ENCODE measurements at regions of chr13 and their contacts with region 1.

Region 1: DNA sequence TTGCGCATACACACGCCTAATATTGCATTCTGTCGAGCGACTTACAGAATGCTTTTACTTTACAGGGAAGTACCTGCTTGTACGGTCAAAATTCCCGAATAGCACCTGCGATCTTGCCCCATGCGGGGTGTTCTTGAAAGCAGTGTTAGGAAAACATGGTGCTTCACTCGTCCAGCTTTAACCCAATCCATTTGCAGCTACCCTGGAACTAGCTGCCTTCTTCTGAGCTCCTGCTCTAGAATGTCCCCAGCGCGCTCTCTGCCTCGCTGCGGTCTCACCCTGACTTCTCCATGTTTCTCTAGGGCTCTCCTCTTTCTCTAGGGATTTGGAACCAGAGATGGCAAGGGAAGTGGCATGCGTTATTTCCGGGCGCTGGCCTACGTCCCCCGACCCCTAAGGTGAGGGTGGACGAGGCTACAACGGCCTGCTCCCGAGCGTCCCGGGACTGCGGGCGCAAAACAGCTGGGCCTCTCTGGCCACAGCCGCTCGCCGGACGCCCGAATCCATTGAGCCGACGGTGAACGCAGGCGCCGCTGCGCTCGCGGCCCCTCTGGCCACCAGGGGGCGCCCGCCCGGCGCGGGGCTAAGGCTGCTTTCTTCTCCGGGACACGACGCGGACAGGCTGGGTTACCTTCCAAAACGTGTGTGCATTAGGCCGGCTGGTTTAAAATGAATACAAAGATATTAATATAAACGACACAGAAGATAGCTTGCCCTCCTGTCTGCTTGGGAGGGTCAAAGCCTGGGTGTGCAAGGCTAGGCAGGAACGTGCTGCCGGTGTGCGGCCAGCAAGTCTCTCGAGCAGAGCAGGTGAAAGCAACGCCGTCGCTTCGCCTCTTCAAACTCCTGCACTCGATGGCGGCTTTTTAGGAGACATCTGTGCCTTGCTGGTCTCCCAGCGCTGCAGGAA is 1.8 kb upstream of the SPRY2 start:
- DNase-seq: peak; percentile 86 to 91
- ATAC-seq: peak; percentile 36 to 64 (median 54)
- H3K4me3 ChIP-seq: peak overlapping the region; percentile 16 to 96 (median 85)
- H3K27ac ChIP-seq: peak overlapping the region; percentile 96 to 99 (median 98)
- H3K4me1 ChIP-seq: peaks cover 0 to 36% (median 26%) of the 10 kb centered on the region in 9 donors
- H3K27me3 ChIP-seq: no peaks in the 10 kb centered on the region
- CTCF ChIP-seq: peak; percentile 35 to 100 (median 99)

Region 2: GRCh38 chr13:79659121-79659521 is 683.6 kb before region 1 on chr13:
- intact Hi-C with region 1: loop called in 1 of 10 experiments (anchors 5 kb)
- DNase-seq: peak; percentile 43 to 59
- ATAC-seq: peak; percentile 81 to 96 (median 88)
- H3K4me3 ChIP-seq: no peak overlapping the region
- H3K27ac ChIP-seq: peak overlapping the region; percentile 29 to 89 (median 64)
- H3K4me1 ChIP-seq: peaks cover 6 to 45% (median 18%) of the 10 kb centered on the region in 9 donors
- H3K27me3 ChIP-seq: no peaks in the 10 kb centered on the region
- CTCF ChIP-seq: no peak

Region 3: DNA sequence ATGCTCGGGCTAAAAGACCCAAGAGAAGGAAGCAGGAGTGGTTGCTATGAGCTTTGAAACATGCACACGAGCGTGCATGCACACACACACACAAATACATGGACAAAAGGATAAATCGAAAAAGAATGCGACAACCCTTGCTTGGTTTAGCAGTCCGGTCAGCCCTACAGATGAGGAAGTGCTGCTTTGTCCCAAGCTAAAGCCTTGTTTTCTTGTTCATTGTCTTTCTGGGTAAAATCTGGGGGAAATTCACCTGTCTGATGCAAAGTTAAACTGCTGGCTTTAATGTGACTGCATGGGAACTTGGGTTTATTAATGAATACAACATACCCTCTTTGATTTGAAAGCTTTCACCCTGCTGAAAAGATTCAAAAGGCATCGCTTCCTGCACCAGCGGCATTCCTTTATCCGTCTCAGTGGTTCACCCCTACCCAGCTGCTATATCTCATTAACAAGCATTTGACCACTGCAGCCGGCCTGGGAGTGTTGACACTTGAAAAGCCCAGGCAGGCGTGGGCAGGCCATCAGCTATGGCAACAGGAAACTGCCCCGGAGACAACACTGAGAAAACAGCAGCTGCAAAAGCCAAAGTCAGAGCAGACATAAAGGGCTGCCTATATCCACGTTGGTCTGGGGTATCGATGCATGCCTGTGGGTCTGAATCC is 560.1 kb before region 1 on chr13:
- intact Hi-C with region 1: loop called in 6 of 10 experiments (anchors 2 to 10 kb)
- DNase-seq: peak; percentile 62 to 77
- ATAC-seq: peak; percentile 90 to 99 (median 96)
- H3K4me3 ChIP-seq: peak overlapping the region in 3 of 10 donors; percentile 0 to 9 (median 3)
- H3K27ac ChIP-seq: peak overlapping the region in 6 of 10 donors; percentile 27 to 56 (median 44)
- H3K4me1 ChIP-seq: peaks cover 0 to 28% (median 15%) of the 10 kb centered on the region in 9 donors
- H3K27me3 ChIP-seq: no peaks in the 10 kb centered on the region
- CTCF ChIP-seq: no peak

Region 4: GRCh38 chr13:80030491-80030890 is 312.2 kb before region 1 on chr13:
- intact Hi-C with region 1: loop called in 6 of 10 experiments (anchors 5 to 10 kb)
- DNase-seq: peak in 1 of 2 donors; percentile 30
- ATAC-seq: peak; percentile 42 to 82 (median 75)
- H3K4me3 ChIP-seq: no peak overlapping the region
- H3K27ac ChIP-seq: no peak overlapping the region
- H3K4me1 ChIP-seq: peaks cover 0 to 7% (median 0%) of the 10 kb centered on the region in 9 donors
- H3K27me3 ChIP-seq: no peaks in the 10 kb centered on the region
- CTCF ChIP-seq: peak in 8 of 9 donors; percentile 8 to 58 (median 38)

Region 5: GRCh38 chr13:80235166-80235966 is 107.4 kb before region 1 on chr13:
- intact Hi-C with region 1: loop called in 1 of 10 experiments (anchors 5 kb)
- DNase-seq: peak in 1 of 2 donors; percentile 22
- ATAC-seq: peak in 6 of 8 donors; percentile 12 to 70 (median 52)
- H3K4me3 ChIP-seq: peak overlapping the region in 4 of 10 donors; percentile 1 to 27 (median 23)
- H3K27ac ChIP-seq: peak overlapping the region in 6 of 10 donors; percentile 17 to 65 (median 43)
- H3K4me1 ChIP-seq: peaks cover 0 to 16% (median 14%) of the 10 kb centered on the region in 9 donors
- H3K27me3 ChIP-seq: no peaks in the 10 kb centered on the region
- CTCF ChIP-seq: no peak

Region 6: DNA sequence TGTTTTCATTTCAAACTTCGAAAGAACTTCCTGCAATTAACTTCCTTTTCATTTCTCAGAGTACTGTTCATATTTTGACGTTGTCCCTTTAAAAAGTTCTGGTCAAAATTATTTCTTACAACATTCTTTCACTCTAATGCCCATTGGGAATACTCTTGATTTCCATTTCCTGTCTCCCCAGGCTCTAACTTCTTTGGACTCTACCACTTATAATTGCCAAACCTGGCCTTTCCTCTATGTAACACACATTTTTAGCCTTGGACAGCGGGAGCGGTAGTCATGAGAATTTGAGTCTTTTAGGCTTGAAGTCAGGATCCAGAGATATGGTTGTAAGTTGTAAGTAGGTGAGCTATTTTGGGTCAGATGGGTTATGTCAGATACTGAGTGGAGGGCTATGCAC is 161.7 kb after region 1 on chr13:
- intact Hi-C with region 1: no loop called
- DNase-seq: peak in 1 of 2 donors; percentile 14
- ATAC-seq: peak; percentile 41 to 95 (median 86)
- H3K4me3 ChIP-seq: no peak overlapping the region
- H3K27ac ChIP-seq: peak overlapping the region in 9 of 10 donors; percentile 29 to 76 (median 56)
- H3K4me1 ChIP-seq: peaks cover 0 to 19% (median 0%) of the 10 kb centered on the region in 9 donors
- H3K27me3 ChIP-seq: no peaks in the 10 kb centered on the region
- CTCF ChIP-seq: no peak

Region 7: DNA sequence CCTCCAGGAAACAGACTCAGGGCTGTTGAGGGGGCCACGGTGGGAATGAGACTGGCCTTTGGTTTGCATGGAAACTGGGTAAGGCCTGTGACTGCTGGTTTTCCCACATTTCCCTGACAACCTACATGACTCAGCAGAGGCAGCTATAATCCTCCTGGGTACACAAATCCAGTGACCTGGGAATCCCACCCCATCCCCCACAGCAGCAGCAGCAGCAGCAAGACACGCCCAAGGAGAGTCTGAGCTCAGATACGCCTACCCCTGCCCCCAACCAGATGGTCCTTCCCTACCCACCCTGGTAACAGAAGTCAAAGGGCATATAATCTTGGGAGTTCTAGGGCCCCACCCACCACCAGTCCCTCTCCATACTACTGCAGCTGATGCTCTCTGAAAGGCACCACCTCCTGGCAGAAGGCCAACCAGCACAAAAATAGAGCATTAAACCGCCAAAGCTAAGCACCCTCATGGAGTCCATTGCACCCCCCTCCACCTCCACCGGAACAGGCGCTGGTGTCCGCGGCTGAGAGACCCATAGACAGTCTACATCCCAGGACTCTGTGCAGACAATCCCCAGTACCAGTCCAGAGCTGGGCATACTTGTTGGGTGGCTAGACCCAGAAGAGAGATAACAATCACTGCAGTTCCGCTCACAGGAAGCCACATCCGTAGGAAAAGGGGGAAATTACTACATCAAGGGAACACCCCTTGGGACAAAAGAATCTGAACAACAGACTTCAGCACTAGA is 235.4 kb after region 1 on chr13:
- intact Hi-C with region 1: loop called in 1 of 10 experiments (anchors 10 kb)
- DNase-seq: peak; percentile 15 to 16
- ATAC-seq: peak in 6 of 8 donors; percentile 29 to 72 (median 55)
- H3K4me3 ChIP-seq: no peak overlapping the region
- H3K27ac ChIP-seq: peak overlapping the region in 1 of 10 donors; percentile 11
- H3K4me1 ChIP-seq: peaks cover 0 to 13% (median 0%) of the 10 kb centered on the region in 9 donors
- H3K27me3 ChIP-seq: no peaks in the 10 kb centered on the region
- CTCF ChIP-seq: no peak

Region 8: GRCh38 chr13:81017513-81018152 is 674.9 kb after region 1 on chr13:
- intact Hi-C with region 1: loop called in 8 of 10 experiments (anchors 5 to 10 kb)
- DNase-seq: no peak
- ATAC-seq: peak in 4 of 8 donors; percentile 44 to 67 (median 49)
- H3K4me3 ChIP-seq: peak overlapping the region in 3 of 10 donors; percentile 10 to 28 (median 20)
- H3K27ac ChIP-seq: no peak overlapping the region
- H3K4me1 ChIP-seq: peaks cover 0 to 6% (median 0%) of the 10 kb centered on the region in 9 donors
- H3K27me3 ChIP-seq: no peaks in the 10 kb centered on the region
- CTCF ChIP-seq: peak; percentile 23 to 82 (median 68)